PC-9 (cell line): ENCODE measurements at regions of chr18 and their contacts with region 1.

Region 1: GRCh38 chr18:11741505-11742145 is 52.6 kb downstream of the GNAL start:
- DNase-seq: no peak
- H3K4me3 ChIP-seq: no peak overlapping the region
- H3K27ac ChIP-seq: no peak overlapping the region
- H3K4me1 ChIP-seq: no peaks in the 10 kb centered on the region
- H3K27me3 ChIP-seq: peaks cover 55% of the 10 kb centered on the region
- CTCF ChIP-seq: peak; percentile 63

Region 2: DNA sequence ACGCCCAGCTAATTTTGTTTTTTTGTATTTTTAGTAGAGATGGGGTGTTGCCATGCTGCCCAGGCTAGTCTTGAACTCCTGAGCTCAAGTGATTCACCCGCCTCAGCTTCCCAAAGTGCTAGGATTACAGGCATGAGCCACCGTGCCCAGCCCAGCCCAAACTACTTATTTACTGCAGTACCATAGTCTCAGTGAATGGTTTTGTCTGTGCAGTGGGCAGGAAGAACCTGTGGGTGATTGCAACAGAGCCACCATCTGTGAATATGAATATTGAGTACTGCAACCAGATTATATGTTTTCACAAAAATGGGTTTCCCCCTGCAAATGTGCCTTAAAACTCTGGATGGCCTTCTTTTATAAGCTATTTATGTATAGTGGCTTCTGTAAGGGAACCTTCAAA is 157.4 kb after region 1 on chr18:
- CTCF ChIA-PET with region 1: interaction called, 10 read pairs
- POLR2A ChIA-PET with region 1: no interaction called
- intact Hi-C with region 1: no loop called
- DNase-seq: no peak
- H3K4me3 ChIP-seq: no peak overlapping the region
- H3K27ac ChIP-seq: no peak overlapping the region
- H3K4me1 ChIP-seq: peaks cover 5% of the 10 kb centered on the region
- H3K27me3 ChIP-seq: no peaks in the 10 kb centered on the region
- CTCF ChIP-seq: no peak